ENCODE measurements at regions of chr7 and their contacts with region 1.

Region 1: GRCh38 chr7:55285665-55286064 is 79.5 kb upstream of the LANCL2 start:
- DNase-seq: no peak
- H3K4me3 ChIP-seq: no peak overlapping the region
- H3K27ac ChIP-seq: no peak overlapping the region
- H3K4me1 ChIP-seq: no peaks in the 10 kb centered on the region
- CTCF ChIP-seq: no peak

Region 2: GRCh38 chr7:55073945-55074499 is 211.6 kb before region 1 on chr7:
- CTCF ChIA-PET with region 1: no interaction called
- POLR2A ChIA-PET with region 1: no interaction called
- intact Hi-C with region 1: no loop called
- DNase-seq: peak; percentile 20
- H3K4me3 ChIP-seq: no peak overlapping the region
- H3K27ac ChIP-seq: no peak overlapping the region
- H3K4me1 ChIP-seq: peaks cover 16% of the 10 kb centered on the region
- CTCF ChIP-seq: no peak

Region 3: GRCh38 chr7:55271069-55271626 is 14.5 kb before region 1 on chr7:
- CTCF ChIA-PET with region 1: no interaction called
- POLR2A ChIA-PET with region 1: no interaction called
- intact Hi-C with region 1: loop called (anchors 1 kb)
- DNase-seq: no peak
- H3K4me3 ChIP-seq: no peak overlapping the region
- H3K27ac ChIP-seq: no peak overlapping the region
- H3K4me1 ChIP-seq: no peaks in the 10 kb centered on the region
- CTCF ChIP-seq: peak; percentile 57